Mammary epithelial cell (primary cell): ENCODE measurements at regions of chr17 and their contacts with region 1.

Region 1: DNA sequence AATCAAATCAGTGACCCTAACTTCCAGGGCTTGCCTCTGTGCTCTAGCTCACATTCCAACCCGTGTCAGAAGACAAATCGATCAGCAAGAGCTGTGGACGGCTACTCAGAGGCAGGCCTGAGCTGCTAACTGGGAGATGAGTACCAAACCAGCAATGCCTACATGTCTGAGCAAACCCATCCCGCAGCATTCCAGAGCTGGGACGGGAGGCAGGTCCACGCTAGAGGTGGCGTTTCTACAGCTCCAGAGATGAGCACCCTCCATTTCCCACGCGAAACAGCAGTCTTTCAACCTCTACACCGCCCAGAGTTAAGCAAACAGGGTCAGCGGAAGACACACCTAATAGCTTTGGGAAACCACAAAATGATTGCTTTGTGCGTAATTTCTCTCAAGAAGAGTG is 6.5 kb downstream of the NXN start:
- DNase-seq: peak; percentile 99
- H3K4me3 ChIP-seq: no peak overlapping the region
- H3K27ac ChIP-seq: peak overlapping the region; percentile 91
- H3K4me1 ChIP-seq: peaks cover 41% of the 10 kb centered on the region
- H3K27me3 ChIP-seq: no peaks in the 10 kb centered on the region
- CTCF ChIP-seq: no peak

Region 2: DNA sequence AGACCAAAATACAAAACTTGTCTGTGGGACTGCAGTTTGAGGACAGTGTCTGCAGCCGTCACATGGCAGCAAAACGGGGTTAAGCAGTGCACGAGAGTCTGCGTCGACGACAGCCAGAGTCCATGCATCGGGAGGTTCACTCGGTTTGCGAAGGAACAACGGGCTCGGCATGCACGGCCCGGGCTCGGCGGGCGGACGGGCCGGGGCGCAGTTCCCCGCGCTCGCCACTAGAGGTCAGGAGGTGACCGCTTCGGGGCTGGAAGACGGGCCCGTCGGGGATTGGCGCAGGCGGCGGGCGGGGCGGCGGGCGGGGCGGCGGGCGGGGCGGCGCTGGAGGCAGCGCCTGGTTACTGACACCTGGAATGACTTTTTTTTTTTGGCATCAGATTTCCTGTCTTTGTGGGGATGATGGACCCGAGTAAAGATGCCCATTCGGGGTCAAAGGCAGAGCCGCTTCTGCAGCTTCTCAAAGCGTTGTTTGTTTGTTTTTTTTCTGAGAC is 829.2 kb before region 1 on chr17:
- CTCF ChIA-PET with region 1: interaction called, 18 read pairs
- dilution Hi-C with region 1: no loop called
- in situ Hi-C with region 1: no loop called
- intact Hi-C with region 1: no loop called
- DNase-seq: peak; percentile 61
- H3K4me3 ChIP-seq: no peak overlapping the region
- H3K27ac ChIP-seq: no peak overlapping the region
- H3K4me1 ChIP-seq: no peaks in the 10 kb centered on the region
- H3K27me3 ChIP-seq: no peaks in the 10 kb centered on the region
- CTCF ChIP-seq: peak; percentile 26 to 66

Region 3: GRCh38 chr17:879549-880442 is 93.3 kb before region 1 on chr17:
- CTCF ChIA-PET with region 1: interaction called, 3 read pairs
- dilution Hi-C with region 1: no loop called
- in situ Hi-C with region 1: loop called in 1 of 2 experiments (anchors 10 kb)
- intact Hi-C with region 1: loop called (anchors 1 kb)
- DNase-seq: peak; percentile 91
- H3K4me3 ChIP-seq: no peak overlapping the region
- H3K27ac ChIP-seq: peak overlapping the region; percentile 72
- H3K4me1 ChIP-seq: peaks cover 25% of the 10 kb centered on the region
- H3K27me3 ChIP-seq: no peaks in the 10 kb centered on the region
- CTCF ChIP-seq: peak; percentile 54 to 65

Region 4: GRCh38 chr17:927611-928461 is 45.2 kb before region 1 on chr17:
- CTCF ChIA-PET with region 1: interaction called, 4 read pairs
- dilution Hi-C with region 1: no loop called
- in situ Hi-C with region 1: no loop called
- intact Hi-C with region 1: loop called (anchors 1 kb)
- DNase-seq: peak; percentile 87
- H3K4me3 ChIP-seq: peak overlapping the region in 1 of 3 experiments; percentile 1
- H3K27ac ChIP-seq: peak overlapping the region; percentile 95
- H3K4me1 ChIP-seq: peaks cover 66% of the 10 kb centered on the region
- H3K27me3 ChIP-seq: no peaks in the 10 kb centered on the region
- CTCF ChIP-seq: no peak

Region 5: DNA sequence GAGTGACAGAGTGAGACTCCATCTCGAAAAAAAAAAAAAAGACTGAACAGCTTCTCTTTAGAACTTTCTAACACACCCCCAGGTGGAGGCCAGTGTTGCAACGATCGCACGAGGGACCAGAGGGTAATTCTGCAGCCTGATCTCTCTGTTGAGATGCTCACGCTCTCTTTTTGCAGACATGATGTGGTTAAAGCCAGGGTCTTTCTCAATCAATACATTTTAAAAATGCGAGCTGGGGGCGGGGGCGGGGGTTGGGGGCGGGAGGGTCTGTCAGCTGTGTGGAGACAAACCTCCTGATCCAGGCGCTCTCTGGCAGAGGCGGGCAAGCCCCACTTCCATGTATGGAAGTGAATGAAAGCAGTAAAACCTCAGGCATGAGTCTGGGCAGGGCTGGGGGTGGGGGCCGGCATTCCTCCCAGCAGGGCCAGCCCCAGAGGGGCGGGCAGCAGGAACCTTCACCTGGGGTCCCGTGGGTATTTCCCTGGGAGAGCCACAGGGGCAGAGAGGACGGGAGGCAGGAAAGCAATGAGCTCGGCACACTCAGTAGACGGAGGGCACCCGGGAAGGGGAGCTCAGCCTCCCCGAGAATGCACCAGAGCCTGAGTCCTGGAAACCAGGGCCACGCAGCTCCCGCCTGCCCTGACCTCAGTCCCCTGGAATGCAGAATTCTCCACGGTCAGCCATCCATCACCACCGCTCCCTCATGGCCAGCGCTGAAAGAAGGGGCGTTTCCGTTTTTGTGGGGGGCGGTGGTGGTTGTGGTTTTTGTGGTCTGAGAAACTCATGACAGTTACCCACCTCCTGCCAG is 21.5 kb before region 1 on chr17:
- CTCF ChIA-PET with region 1: no interaction called
- dilution Hi-C with region 1: no loop called
- in situ Hi-C with region 1: no loop called
- intact Hi-C with region 1: loop called (anchors 1 kb)
- DNase-seq: peak; percentile 65
- H3K4me3 ChIP-seq: no peak overlapping the region
- H3K27ac ChIP-seq: peak overlapping the region; percentile 54
- H3K4me1 ChIP-seq: peaks cover 29% of the 10 kb centered on the region
- H3K27me3 ChIP-seq: no peaks in the 10 kb centered on the region
- CTCF ChIP-seq: no peak

Region 6: DNA sequence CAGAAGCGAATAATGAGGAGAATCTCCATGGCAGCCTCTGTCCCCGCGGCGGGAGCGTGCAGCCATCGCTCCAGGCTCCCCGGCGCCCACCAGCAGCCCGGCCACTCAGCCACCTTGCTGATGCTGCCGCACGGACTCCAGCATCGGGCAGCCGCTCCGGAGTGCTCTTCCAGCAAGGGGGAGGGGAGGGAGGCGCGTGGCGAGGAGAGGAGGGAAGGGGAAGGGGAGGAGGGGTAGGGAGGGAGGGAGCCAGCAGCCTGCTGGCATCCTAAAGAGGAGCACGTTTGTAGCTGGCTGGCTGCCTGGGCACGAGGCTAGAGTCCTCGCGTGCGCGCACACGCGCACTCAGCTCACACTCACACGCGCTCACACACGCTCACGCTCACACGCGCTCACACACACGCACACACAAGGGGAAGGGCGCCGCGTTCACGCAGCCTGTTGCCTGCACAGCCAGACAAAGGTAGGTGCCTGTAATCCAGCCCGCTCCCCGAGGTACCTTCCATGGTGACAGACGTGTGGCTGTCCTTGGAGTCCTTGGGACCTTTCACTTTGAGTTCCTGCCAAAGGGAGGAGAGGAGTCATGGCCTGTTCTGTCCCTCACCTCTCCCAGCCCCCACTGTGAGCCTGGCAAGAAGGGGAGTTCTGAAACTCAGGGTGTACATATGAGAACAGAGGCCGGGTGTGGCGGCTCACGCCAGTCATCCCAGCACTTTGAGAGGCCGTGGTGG is 105.9 kb after region 1 on chr17:
- CTCF ChIA-PET with region 1: no interaction called
- dilution Hi-C with region 1: no loop called
- in situ Hi-C with region 1: no loop called
- intact Hi-C with region 1: no loop called
- DNase-seq: no peak
- H3K4me3 ChIP-seq: no peak overlapping the region
- H3K27ac ChIP-seq: no peak overlapping the region
- H3K4me1 ChIP-seq: peaks cover 18% of the 10 kb centered on the region
- H3K27me3 ChIP-seq: no peaks in the 10 kb centered on the region
- CTCF ChIP-seq: no peak

Region 7: GRCh38 chr17:1122533-1123392 is 149.7 kb after region 1 on chr17:
- CTCF ChIA-PET with region 1: no interaction called
- dilution Hi-C with region 1: no loop called
- in situ Hi-C with region 1: no loop called
- intact Hi-C with region 1: no loop called
- DNase-seq: peak; percentile 68
- H3K4me3 ChIP-seq: no peak overlapping the region
- H3K27ac ChIP-seq: no peak overlapping the region
- H3K4me1 ChIP-seq: peaks cover 20% of the 10 kb centered on the region
- H3K27me3 ChIP-seq: no peaks in the 10 kb centered on the region
- CTCF ChIP-seq: peak; percentile 77 to 86

Region 8: DNA sequence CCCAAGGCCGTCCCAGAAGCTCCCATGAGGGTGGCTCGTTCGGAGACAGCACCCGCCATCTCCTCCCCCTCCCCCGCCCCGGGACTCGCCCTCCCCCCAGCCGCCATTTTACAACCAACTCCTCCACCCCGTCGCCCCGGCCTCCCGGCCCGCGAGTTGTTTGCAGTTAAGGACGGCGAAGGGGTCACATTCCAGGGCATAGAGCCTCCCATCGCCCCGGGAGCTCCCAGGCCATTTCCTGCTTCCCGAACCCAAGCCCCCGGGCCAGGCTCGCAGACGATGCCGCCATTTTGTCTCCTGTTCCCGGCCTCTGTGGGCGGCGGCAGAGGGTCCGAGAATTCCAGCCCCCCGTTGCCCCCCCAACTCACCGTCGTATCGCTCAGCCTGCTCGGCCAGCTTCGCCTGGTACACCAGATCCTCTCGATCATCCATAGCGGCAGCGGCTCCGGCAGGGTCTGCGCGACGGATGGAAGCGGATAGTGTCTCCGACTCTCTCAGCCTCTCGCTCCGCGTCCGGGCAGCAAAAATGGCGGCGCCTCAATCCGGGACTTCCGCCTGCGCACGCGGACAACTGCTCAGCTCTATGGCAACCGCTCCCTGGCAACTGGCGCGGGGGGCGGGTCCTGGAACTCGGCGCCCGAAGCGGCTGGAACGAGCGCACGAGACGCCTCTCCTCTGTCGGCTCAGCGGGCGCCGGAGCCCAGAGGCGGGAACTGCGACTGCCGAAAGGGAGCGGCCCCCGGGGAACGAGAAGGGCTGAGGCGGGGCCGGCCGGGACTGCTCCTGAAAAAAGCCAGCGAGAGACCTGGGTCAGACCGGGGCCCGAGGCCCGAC is 426.8 kb after region 1 on chr17 and contains the start of gene YWHAE:
- CTCF ChIA-PET with region 1: no interaction called
- dilution Hi-C with region 1: no loop called
- in situ Hi-C with region 1: no loop called
- intact Hi-C with region 1: no loop called
- DNase-seq: peak; percentile 96
- H3K4me3 ChIP-seq: peak within 1 kb of the TSS; percentile 75 to 97 (median 90)
- H3K27ac ChIP-seq: peak within 1 kb of the TSS; percentile 96
- H3K4me1 ChIP-seq: peaks cover 9% of the 10 kb centered on the region
- H3K27me3 ChIP-seq: no peaks in the 10 kb centered on the region
- CTCF ChIP-seq: no peak
- total RNA-seq, gene YWHAE: 528 to 689 TPM